HepG2 (cell line): ENCODE measurements at regions of chr4 and their contacts with region 1.

Region 1: GRCh38 chr4:169270810-169271691 is at the start of gene SH3RF1:
- DNase-seq: peak; percentile 38
- ATAC-seq: peak; percentile 86
- H3K4me3 ChIP-seq: peak within 1 kb of the TSS; percentile 73 to 94 (median 84)
- H3K27ac ChIP-seq: peak within 1 kb of the TSS; percentile 55
- H3K4me1 ChIP-seq: peaks cover 49% of the 10 kb centered on the region
- H3K27me3 ChIP-seq: peaks cover 0 to 4% of the 10 kb centered on the region in 2 experiments; a peak in 1 of 5 replicates
- CTCF ChIP-seq: peak; percentile 48
- EP300 ChIP-seq: no peak
- POLR2A ChIP-seq: peak in 1 of 2 experiments; percentile 45; a peak in 1 of 4 replicates
- RAD21 ChIP-seq: peak; percentile 71
- total RNA-seq, gene SH3RF1: 3.2 and 3.8 TPM in 2 replicates

Region 2: GRCh38 chr4:169079942-169080827 is 190.9 kb before region 1 on chr4:
- CTCF ChIA-PET with region 1: no interaction called
- POLR2A ChIA-PET with region 1: no interaction called
- in situ Hi-C with region 1: no loop called
- intact Hi-C with region 1: loop called (anchors 5 kb)
- DNase-seq: peak; percentile 88
- ATAC-seq: peak; percentile 95
- H3K4me3 ChIP-seq: peak overlapping the region in 2 of 3 experiments; percentile 28 to 60; a peak in 4 of 6 replicates
- H3K27ac ChIP-seq: no peak overlapping the region
- H3K4me1 ChIP-seq: peaks cover 22% of the 10 kb centered on the region
- H3K27me3 ChIP-seq: no peaks in the 10 kb centered on the region
- CTCF ChIP-seq: no peak
- EP300 ChIP-seq: peak in 1 of 2 experiments; percentile 53; a peak in 1 of 4 replicates
- POLR2A ChIP-seq: peak in 1 of 2 experiments; percentile 32; a peak in 1 of 4 replicates
- RAD21 ChIP-seq: no peak

Region 3: DNA sequence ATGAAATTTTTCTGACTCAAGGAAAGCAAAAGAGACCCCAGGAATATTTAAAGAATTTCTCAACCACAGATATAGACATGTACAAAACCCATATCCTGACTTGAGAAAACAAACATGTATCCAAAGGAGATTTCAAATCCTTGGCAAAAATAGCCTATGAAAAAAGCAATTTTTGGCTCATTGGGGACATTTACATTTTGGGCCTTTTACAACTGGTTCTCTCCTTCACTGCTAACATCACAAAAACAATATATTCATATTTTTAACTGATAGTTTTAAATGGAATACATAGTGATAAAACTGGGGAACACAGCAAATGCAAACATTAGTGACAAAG is 65.3 kb before region 1 on chr4:
- CTCF ChIA-PET with region 1: no interaction called
- POLR2A ChIA-PET with region 1: no interaction called
- in situ Hi-C with region 1: no loop called
- intact Hi-C with region 1: loop called (anchors 1 kb)
- DNase-seq: no peak
- ATAC-seq: no peak
- H3K4me3 ChIP-seq: no peak overlapping the region
- H3K27ac ChIP-seq: no peak overlapping the region
- H3K4me1 ChIP-seq: peaks cover 54% of the 10 kb centered on the region
- H3K27me3 ChIP-seq: no peaks in the 10 kb centered on the region
- CTCF ChIP-seq: no peak
- EP300 ChIP-seq: no peak
- POLR2A ChIP-seq: no peak
- RAD21 ChIP-seq: no peak

Region 4: GRCh38 chr4:169249214-169249973 is 21.7 kb before region 1 on chr4:
- CTCF ChIA-PET with region 1: no interaction called
- POLR2A ChIA-PET with region 1: interaction called, 20 read pairs
- in situ Hi-C with region 1: no loop called
- intact Hi-C with region 1: loop called (anchors 2 kb)
- DNase-seq: peak; percentile 90
- ATAC-seq: peak; percentile 93
- H3K4me3 ChIP-seq: peak overlapping the region in 1 of 3 experiments; percentile 17; a peak in 2 of 6 replicates
- H3K27ac ChIP-seq: peak overlapping the region; percentile 77
- H3K4me1 ChIP-seq: peaks cover 78% of the 10 kb centered on the region
- H3K27me3 ChIP-seq: no peaks in the 10 kb centered on the region
- CTCF ChIP-seq: no peak
- EP300 ChIP-seq: peak in 1 of 2 experiments; percentile 77; a peak in 2 of 4 replicates
- POLR2A ChIP-seq: no peak
- RAD21 ChIP-seq: no peak

Region 5: DNA sequence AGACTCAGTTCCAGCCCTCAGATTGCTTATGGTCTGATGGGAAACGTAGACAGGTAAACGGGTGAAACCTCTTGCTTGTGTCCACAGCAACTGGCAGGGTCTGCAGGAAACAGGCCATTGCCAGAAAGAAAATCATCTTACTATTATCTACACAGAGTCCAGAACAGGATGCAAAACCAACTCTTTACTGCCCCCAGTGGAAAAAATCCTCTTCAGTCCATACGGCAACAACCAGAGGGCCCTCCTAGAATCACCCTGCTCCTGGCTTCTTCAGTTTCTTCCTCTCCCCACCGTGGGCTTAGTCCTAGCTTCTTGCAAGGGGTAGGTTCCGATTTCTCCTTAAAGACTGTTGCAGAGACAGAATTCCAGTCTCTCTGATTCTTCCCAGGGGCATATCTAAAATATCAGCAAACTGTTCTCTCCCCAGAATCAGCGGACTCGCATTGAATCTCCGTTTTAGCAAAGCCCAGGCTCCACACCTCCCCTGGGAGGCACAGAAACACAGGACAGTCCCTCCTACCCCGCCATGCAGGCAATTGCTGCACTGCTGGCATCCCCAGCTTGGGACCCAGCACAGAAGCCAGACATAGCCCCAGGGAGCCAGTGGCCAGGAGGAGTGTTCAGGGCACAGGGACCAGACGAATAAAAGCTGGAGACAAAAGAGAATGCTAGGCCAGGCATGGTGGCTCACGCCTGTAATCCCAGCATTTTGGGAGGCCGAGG is 40.8 kb after region 1 on chr4:
- CTCF ChIA-PET with region 1: no interaction called
- POLR2A ChIA-PET with region 1: no interaction called
- in situ Hi-C with region 1: no loop called
- intact Hi-C with region 1: loop called (anchors 2 kb)
- DNase-seq: peak; percentile 73
- ATAC-seq: peak; percentile 96
- H3K4me3 ChIP-seq: peak overlapping the region; percentile 40 to 48 (median 44); a peak in 5 of 6 replicates
- H3K27ac ChIP-seq: no peak overlapping the region
- H3K4me1 ChIP-seq: peaks cover 50% of the 10 kb centered on the region
- H3K27me3 ChIP-seq: no peaks in the 10 kb centered on the region
- CTCF ChIP-seq: peak; percentile 71
- EP300 ChIP-seq: no peak
- POLR2A ChIP-seq: no peak
- RAD21 ChIP-seq: peak; percentile 59